Activated CD4-positive, alpha-beta memory T cell treated with anti-CD3 and anti-CD28 coated beads for 36 hours (primary cell): ENCODE measurements at regions of chr10 and their contacts with region 1.

Region 1: GRCh38 chr10:80662577-80663261 is 125.0 kb downstream of the SH2D4B start:
- DNase-seq: peak; percentile 80
- H3K4me3 Mint-ChIP-seq: peak overlapping the region; percentile 41
- H3K27ac Mint-ChIP-seq: no peak overlapping the region
- H3K4me1 Mint-ChIP-seq: peaks cover 4% of the 10 kb centered on the region
- H3K27me3 Mint-ChIP-seq: peaks cover 15% of the 10 kb centered on the region

Region 2: GRCh38 chr10:80535671-80536365 is 126.9 kb before region 1 on chr10:
- CTCF ChIA-PET with region 1: no interaction called
- POLR2A ChIA-PET with region 1: no interaction called
- intact Hi-C with region 1: loop called (anchors 5 kb)
- DNase-seq: peak; percentile 85
- H3K4me3 Mint-ChIP-seq: peak overlapping the region; percentile 93
- H3K27ac Mint-ChIP-seq: peak overlapping the region; percentile 99
- H3K4me1 Mint-ChIP-seq: peaks cover 26% of the 10 kb centered on the region
- H3K27me3 Mint-ChIP-seq: no peaks in the 10 kb centered on the region

Region 3: GRCh38 chr10:80647173-80647811 is 15.4 kb before region 1 on chr10:
- CTCF ChIA-PET with region 1: interaction called, 39 read pairs
- POLR2A ChIA-PET with region 1: no interaction called
- intact Hi-C with region 1: no loop called
- DNase-seq: no peak
- H3K4me3 Mint-ChIP-seq: no peak overlapping the region
- H3K27ac Mint-ChIP-seq: no peak overlapping the region
- H3K4me1 Mint-ChIP-seq: no peaks in the 10 kb centered on the region
- H3K27me3 Mint-ChIP-seq: peaks cover 12% of the 10 kb centered on the region

Region 4: DNA sequence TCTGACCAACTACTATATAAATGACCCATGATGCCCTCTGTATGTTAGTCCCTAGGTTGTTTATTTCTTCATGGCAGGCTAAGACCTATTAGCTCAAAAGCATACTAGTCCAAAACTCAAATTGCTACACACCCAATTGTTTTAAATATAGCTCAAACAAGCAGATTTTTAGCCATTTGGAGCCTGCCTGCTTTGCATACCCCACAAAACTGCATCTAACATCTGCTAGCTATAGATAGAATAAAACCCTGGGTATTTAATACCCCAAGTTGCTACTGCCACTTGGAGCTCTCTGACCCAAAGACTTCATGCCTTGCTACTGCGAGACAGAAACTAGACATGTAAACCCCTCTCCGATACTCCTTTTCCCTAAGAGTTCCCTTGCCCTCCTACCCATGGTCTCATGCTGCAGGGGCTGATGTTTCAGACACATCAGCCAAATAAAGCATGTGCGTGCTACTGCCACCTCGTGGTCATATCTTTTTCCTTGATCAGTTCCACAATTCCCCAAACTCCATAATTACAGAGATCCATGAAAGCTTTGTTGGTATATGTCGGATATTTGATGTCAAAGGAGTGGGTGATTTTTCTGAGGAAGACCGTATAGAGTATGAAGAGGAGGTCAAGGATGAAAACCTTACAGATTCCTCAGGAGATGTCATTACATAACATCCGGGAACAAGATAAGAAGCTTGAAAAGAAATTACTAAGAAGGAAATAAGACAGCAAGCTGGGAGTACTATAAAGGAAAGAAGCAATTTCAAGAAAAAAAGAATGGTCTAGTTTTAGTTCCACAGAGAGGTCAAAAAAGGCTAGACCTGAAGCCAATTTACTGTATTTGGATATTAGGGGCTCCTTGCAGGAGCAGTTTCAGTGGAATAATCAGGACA is 261.6 kb after region 1 on chr10:
- CTCF ChIA-PET with region 1: interaction called, 19 read pairs
- POLR2A ChIA-PET with region 1: no interaction called
- intact Hi-C with region 1: loop called (anchors 1 kb)
- DNase-seq: peak; percentile 26
- H3K4me3 Mint-ChIP-seq: no peak overlapping the region
- H3K27ac Mint-ChIP-seq: no peak overlapping the region
- H3K4me1 Mint-ChIP-seq: no peaks in the 10 kb centered on the region
- H3K27me3 Mint-ChIP-seq: peaks cover 3% of the 10 kb centered on the region